Caco-2 (cell line): ENCODE measurements at regions of chr20 and their contacts with region 1.

Region 1: DNA sequence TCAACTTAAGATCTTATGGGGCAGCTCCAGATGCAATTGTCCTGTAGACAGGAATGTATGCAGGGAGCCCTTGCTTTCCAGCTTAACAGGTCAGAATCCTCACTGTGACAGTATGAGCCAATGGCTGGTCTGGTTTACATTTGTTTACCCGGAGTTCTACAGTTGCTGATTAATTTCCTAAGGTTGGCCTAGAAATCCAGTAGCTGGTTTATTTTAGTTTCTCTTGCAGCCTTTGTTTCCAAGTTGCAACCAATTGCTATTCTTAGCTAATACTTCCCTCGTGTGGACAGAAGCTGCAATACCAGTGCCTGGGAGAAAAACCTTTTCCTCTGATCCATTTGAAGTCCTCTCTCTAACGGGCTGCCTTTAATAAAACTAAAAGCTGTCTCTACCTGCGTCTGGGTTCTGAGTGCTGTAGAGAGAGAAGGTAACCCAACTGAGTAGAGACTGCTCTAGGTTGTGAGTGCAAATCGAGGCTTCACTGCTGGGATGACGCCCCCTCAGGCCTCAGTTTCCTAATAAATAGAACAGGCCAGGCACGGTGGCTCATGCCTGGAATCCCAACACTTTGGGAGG is 45.9 kb downstream of the ZNF217 start:
- DNase-seq: peak; percentile 75 to 85
- H3K4me3 ChIP-seq: no peak overlapping the region
- H3K4me3 Mint-ChIP-seq: no peak overlapping the region
- H3K27ac Mint-ChIP-seq: no peak overlapping the region
- H3K4me1 ChIP-seq: peaks cover 7% of the 10 kb centered on the region; the same call in 1 of the 2 replicates
- H3K4me1 Mint-ChIP-seq: peaks cover 5% of the 10 kb centered on the region
- H3K27me3 ChIP-seq: no peaks in the 10 kb centered on the region
- H3K27me3 Mint-ChIP-seq: no peaks in the 10 kb centered on the region
- CTCF ChIP-seq: peak; percentile 99

Region 2: GRCh38 chr20:52747845-52748284 is 799.9 kb before region 1 on chr20:
- CTCF ChIA-PET with region 1: no interaction called
- POLR2A ChIA-PET with region 1: no interaction called
- intact Hi-C with region 1: loop called (anchors 1 kb)
- DNase-seq: peak in 1 of 2 experiments; percentile 26
- H3K4me3 ChIP-seq: no peak overlapping the region
- H3K4me3 Mint-ChIP-seq: no peak overlapping the region
- H3K27ac Mint-ChIP-seq: no peak overlapping the region
- H3K4me1 ChIP-seq: no peaks in the 10 kb centered on the region
- H3K4me1 Mint-ChIP-seq: no peaks in the 10 kb centered on the region
- H3K27me3 ChIP-seq: no peaks in the 10 kb centered on the region; the same call in 1 of the 2 replicates
- H3K27me3 Mint-ChIP-seq: peaks cover 18% of the 10 kb centered on the region
- CTCF ChIP-seq: peak; percentile 57 to 58

Region 3: GRCh38 chr20:53216856-53217576 is 330.7 kb before region 1 on chr20:
- CTCF ChIA-PET with region 1: interaction called, 6 read pairs
- POLR2A ChIA-PET with region 1: no interaction called
- intact Hi-C with region 1: loop called (anchors 2 kb)
- DNase-seq: peak; percentile 79 to 92
- H3K4me3 ChIP-seq: no peak overlapping the region
- H3K4me3 Mint-ChIP-seq: no peak overlapping the region
- H3K27ac Mint-ChIP-seq: no peak overlapping the region
- H3K4me1 ChIP-seq: no peaks in the 10 kb centered on the region
- H3K4me1 Mint-ChIP-seq: no peaks in the 10 kb centered on the region
- H3K27me3 ChIP-seq: peaks cover 2% of the 10 kb centered on the region; the same call in 1 of the 2 replicates
- H3K27me3 Mint-ChIP-seq: peaks cover 26% of the 10 kb centered on the region
- CTCF ChIP-seq: peak; percentile 99 to 100

Region 4: DNA sequence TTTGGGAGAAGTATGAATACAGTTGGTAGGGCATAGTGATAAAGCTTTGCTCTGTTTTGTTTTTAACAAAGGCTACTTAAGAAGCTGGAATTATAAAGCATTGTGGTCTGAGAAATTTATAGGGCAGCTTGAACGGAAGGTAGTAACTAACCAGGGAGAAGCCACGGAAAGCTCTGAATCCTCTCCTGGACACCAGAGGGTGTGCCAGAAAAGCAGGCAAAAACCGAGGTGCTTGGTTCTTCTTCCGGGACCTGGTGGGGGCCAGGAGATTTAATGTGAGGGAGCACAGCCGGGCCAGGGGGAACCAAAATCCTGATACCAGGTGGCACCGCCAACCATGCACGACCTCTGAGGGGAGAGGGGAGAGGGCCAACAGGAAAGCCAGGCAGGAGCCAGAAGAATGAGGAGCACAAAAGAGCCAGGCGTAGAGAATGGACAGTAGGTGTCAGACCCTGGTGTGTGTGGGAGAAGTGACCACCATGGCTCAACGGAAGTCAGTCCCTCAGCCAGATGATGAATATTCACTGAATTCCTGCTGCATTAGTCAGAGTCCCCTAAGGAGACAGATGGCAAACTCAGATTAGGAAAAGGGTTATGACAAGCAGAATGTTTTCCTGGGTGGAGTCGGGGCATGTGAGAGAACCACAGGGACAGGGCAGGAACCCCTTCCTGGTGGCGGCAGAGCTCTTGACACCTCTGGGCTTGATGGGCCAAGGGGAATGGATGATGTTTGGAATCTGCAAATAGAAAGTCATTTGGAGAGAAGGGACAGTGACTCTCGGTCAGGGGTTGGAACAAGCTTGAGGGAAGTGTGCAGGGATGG is 216.4 kb before region 1 on chr20:
- CTCF ChIA-PET with region 1: interaction called, 4 read pairs
- POLR2A ChIA-PET with region 1: no interaction called
- intact Hi-C with region 1: loop called (anchors 10 kb)
- DNase-seq: peak; percentile 43 to 54
- H3K4me3 ChIP-seq: no peak overlapping the region
- H3K4me3 Mint-ChIP-seq: no peak overlapping the region
- H3K27ac Mint-ChIP-seq: peak overlapping the region; percentile 66
- H3K4me1 ChIP-seq: peaks cover 10% of the 10 kb centered on the region; the same call in 1 of the 2 replicates
- H3K4me1 Mint-ChIP-seq: peaks cover 23% of the 10 kb centered on the region
- H3K27me3 ChIP-seq: no peaks in the 10 kb centered on the region
- H3K27me3 Mint-ChIP-seq: peaks cover 3% of the 10 kb centered on the region
- CTCF ChIP-seq: no peak

Region 5: GRCh38 chr20:53413186-53413631 is 134.5 kb before region 1 on chr20:
- CTCF ChIA-PET with region 1: interaction called, 120 read pairs
- POLR2A ChIA-PET with region 1: no interaction called
- intact Hi-C with region 1: loop called (anchors 1 kb)
- DNase-seq: peak; percentile 92 to 93
- H3K4me3 ChIP-seq: no peak overlapping the region
- H3K4me3 Mint-ChIP-seq: peak overlapping the region; percentile 48
- H3K27ac Mint-ChIP-seq: no peak overlapping the region
- H3K4me1 ChIP-seq: no peaks in the 10 kb centered on the region
- H3K4me1 Mint-ChIP-seq: no peaks in the 10 kb centered on the region
- H3K27me3 ChIP-seq: no peaks in the 10 kb centered on the region; the same call in 1 of the 2 replicates
- H3K27me3 Mint-ChIP-seq: no peaks in the 10 kb centered on the region
- CTCF ChIP-seq: peak; percentile 97 to 100

Region 6: GRCh38 chr20:53502820-53503219 is 44.9 kb before region 1 on chr20:
- CTCF ChIA-PET with region 1: no interaction called
- POLR2A ChIA-PET with region 1: no interaction called
- intact Hi-C with region 1: no loop called
- DNase-seq: no peak
- H3K4me3 ChIP-seq: peak overlapping the region; percentile 55
- H3K4me3 Mint-ChIP-seq: peak overlapping the region; percentile 69
- H3K27ac Mint-ChIP-seq: peak overlapping the region; percentile 48
- H3K4me1 ChIP-seq: no peaks in the 10 kb centered on the region
- H3K4me1 Mint-ChIP-seq: no peaks in the 10 kb centered on the region
- H3K27me3 ChIP-seq: no peaks in the 10 kb centered on the region
- H3K27me3 Mint-ChIP-seq: no peaks in the 10 kb centered on the region
- CTCF ChIP-seq: no peak

Region 7: DNA sequence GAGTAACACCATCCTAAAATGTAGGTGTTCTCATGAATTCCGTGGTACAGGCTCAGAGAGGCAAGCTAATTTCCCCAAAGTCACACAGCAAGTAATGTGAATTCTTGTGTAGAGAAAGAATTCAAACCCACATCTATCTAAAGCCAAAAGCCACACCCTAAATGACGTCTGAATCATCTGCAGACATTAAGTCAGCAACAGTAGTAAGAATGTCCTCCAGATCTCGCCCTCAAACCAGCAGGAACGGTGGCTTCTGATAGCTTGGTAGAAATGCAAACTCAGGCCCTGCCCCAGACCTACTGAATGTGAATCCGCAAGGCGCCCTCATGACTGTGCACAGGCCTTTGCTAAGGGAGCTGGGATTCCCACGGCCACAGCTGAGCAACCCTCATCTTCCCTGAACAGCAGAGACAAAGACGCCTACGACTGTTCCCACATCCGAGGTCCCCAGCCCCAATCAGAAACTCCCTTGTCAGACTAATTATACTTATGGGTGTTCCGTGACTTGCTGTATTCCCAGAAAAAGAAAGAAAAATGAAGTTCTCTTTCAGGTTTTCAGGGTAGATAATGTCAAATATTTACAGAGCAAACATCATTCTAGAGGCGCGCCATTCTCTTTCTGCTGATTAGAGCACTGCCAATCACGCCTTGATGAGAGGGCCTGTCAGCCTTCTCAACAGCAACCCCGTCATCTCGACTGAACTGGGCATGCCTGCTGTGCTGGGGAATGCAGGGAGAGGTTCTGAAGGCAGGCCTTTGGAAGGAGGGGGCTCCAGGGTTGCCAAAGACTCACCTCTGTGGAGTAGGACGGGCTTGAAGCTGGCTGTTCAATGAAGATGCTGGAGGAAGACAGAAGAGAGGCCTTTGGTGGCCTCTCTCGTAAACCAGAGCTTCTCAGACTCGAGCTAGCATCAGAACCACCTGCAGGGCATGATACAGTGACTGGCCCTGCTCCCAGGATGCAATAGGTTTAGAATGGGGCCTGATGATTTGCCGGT is 34.2 kb before region 1 on chr20:
- CTCF ChIA-PET with region 1: interaction called, 23 read pairs
- POLR2A ChIA-PET with region 1: interaction called, 5 read pairs
- intact Hi-C with region 1: loop called (anchors 1 kb)
- DNase-seq: peak; percentile 97 to 98
- H3K4me3 ChIP-seq: peak overlapping the region; percentile 24; the same call in 1 of the 2 replicates
- H3K4me3 Mint-ChIP-seq: peak overlapping the region; percentile 61
- H3K27ac Mint-ChIP-seq: peak overlapping the region; percentile 96
- H3K4me1 ChIP-seq: peaks cover 47% of the 10 kb centered on the region
- H3K4me1 Mint-ChIP-seq: peaks cover 50% of the 10 kb centered on the region
- H3K27me3 ChIP-seq: no peaks in the 10 kb centered on the region
- H3K27me3 Mint-ChIP-seq: no peaks in the 10 kb centered on the region
- CTCF ChIP-seq: no peak

Region 8: DNA sequence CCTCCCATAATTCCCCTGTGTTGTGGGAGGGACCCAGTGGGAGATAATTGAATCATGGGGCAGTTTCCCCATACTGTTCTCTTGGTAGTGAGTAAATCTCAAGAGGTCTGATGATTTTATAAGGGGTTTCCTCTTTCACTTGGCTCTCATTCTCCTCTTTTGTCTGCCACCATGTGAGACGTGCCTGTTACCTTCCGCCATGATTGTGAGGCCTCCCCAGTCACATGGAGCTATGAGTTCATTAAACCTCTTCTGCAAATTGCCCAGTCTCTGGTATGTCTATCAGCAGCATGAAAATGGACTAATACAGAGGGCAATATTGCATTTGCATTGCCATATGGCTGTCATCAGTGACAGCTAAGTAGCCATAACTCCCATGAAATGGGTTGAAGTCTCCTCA is 17.3 kb before region 1 on chr20:
- CTCF ChIA-PET with region 1: no interaction called
- POLR2A ChIA-PET with region 1: no interaction called
- intact Hi-C with region 1: no loop called
- DNase-seq: peak in 1 of 2 experiments; percentile 20
- H3K4me3 ChIP-seq: no peak overlapping the region
- H3K4me3 Mint-ChIP-seq: no peak overlapping the region
- H3K27ac Mint-ChIP-seq: no peak overlapping the region
- H3K4me1 ChIP-seq: no peaks in the 10 kb centered on the region
- H3K4me1 Mint-ChIP-seq: no peaks in the 10 kb centered on the region
- H3K27me3 ChIP-seq: no peaks in the 10 kb centered on the region
- H3K27me3 Mint-ChIP-seq: no peaks in the 10 kb centered on the region
- CTCF ChIP-seq: no peak

Region 9: GRCh38 chr20:54062812-54063280 is 515.1 kb after region 1 on chr20:
- CTCF ChIA-PET with region 1: interaction called, 4 read pairs
- POLR2A ChIA-PET with region 1: no interaction called
- intact Hi-C with region 1: loop called (anchors 5 kb)
- DNase-seq: peak in 1 of 2 experiments; percentile 63
- H3K4me3 ChIP-seq: no peak overlapping the region
- H3K4me3 Mint-ChIP-seq: no peak overlapping the region
- H3K27ac Mint-ChIP-seq: no peak overlapping the region
- H3K4me1 ChIP-seq: peaks cover 19% of the 10 kb centered on the region
- H3K4me1 Mint-ChIP-seq: peaks cover 5% of the 10 kb centered on the region
- H3K27me3 ChIP-seq: no peaks in the 10 kb centered on the region
- H3K27me3 Mint-ChIP-seq: no peaks in the 10 kb centered on the region
- CTCF ChIP-seq: peak; percentile 92